Body of pancreas (tissue), 4 donors: ENCODE measurements at regions of chr9 and their contacts with region 1.

Region 1: DNA sequence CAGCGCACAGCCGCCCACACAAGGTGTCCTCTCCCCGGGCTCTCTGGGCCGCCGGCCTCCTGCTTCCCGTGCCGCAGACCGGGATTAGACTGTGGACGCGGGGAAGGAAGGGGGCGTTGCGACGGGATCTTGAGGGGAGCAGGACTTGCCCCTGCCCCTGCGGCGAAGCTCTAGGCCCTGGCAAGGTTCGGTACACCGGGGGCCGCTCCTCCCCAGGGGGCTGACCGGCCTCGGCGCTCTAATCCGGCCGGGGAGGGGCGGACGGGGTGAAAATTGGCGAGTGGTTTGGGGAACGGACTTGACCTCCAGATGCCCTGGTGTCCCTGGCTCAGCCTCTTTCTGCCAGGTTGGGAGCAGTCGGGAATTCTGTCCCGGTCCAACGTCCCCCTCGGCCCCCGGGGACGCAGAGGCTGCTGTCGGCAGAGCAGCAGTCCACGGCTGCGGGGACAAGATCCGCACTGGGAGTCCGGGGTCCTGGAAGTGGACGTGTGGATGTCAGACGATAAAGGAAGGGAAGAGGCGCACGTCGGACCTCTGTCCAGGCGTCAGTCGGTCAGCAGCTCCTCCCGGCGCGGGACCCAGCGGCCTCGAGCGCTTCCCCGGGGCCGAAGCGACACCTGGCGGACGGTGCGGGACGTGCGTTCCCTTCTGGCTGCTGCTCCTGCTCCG is 1.9 kb upstream of the CNTFR start:
- DNase-seq: peak; percentile 80 to 86 (median 84)
- ATAC-seq: peak; percentile 89
- H3K4me3 ChIP-seq: no peak overlapping the region
- H3K27ac ChIP-seq: no peak overlapping the region
- H3K4me1 ChIP-seq: peaks cover 40% of the 10 kb centered on the region
- H3K27me3 ChIP-seq: peaks cover 3 to 4% of the 10 kb centered on the region in 2 donors
- CTCF ChIP-seq: peak; percentile 84 to 91 (median 89)
- POLR2A ChIP-seq: no peak

Region 2: DNA sequence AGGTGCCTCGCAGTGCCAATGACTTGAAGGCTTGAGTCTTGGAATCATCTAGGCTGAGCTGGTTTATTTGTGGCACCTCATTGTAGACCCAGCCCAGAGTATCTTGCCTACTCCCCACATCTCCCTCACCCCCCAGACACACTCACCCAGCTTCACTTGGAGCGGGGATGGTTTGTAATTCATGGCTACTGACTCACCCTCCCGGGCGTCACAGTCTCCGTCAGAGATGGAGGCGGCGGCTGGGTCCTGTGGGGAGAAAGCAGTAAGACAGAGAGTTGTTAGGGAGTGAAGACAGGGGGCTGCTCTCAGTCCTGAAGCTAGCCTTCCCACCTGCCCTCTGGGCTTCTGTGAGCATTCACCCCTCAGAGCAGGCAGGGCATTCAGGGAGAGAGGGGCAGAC is 185.7 kb before region 1 on chr9:
- intact Hi-C with region 1: loop called (anchors 5 kb)
- DNase-seq: no peak
- ATAC-seq: no peak
- H3K4me3 ChIP-seq: no peak overlapping the region
- H3K27ac ChIP-seq: no peak overlapping the region
- H3K4me1 ChIP-seq: no peaks in the 10 kb centered on the region
- H3K27me3 ChIP-seq: no peaks in the 10 kb centered on the region
- CTCF ChIP-seq: no peak
- POLR2A ChIP-seq: no peak

Region 3: GRCh38 chr9:34437006-34437925 is 154.1 kb before region 1 on chr9:
- intact Hi-C with region 1: loop called (anchors 10 kb)
- DNase-seq: peak; percentile 69 to 81 (median 74)
- ATAC-seq: peak; percentile 80
- H3K4me3 ChIP-seq: no peak overlapping the region
- H3K27ac ChIP-seq: no peak overlapping the region
- H3K4me1 ChIP-seq: no peaks in the 10 kb centered on the region
- H3K27me3 ChIP-seq: no peaks in the 10 kb centered on the region
- CTCF ChIP-seq: peak; percentile 58 to 85 (median 79)
- POLR2A ChIP-seq: no peak

Region 4: GRCh38 chr9:34554211-34555001 is 37.0 kb before region 1 on chr9:
- intact Hi-C with region 1: loop called (anchors 5 kb)
- DNase-seq: no peak
- ATAC-seq: no peak
- H3K4me3 ChIP-seq: no peak overlapping the region
- H3K27ac ChIP-seq: no peak overlapping the region
- H3K4me1 ChIP-seq: peaks cover 2% of the 10 kb centered on the region
- H3K27me3 ChIP-seq: no peaks in the 10 kb centered on the region
- CTCF ChIP-seq: no peak
- POLR2A ChIP-seq: no peak